ENCODE measurements at regions of chr5 and their contacts with region 1.

Region 1: GRCh38 chr5:169701910-169702451 is 64.9 kb downstream of the DOCK2 start:
- DNase-seq: no peak
- H3K4me3 Mint-ChIP-seq: no peak overlapping the region
- H3K27ac Mint-ChIP-seq: peak overlapping the region; percentile 75
- H3K4me1 Mint-ChIP-seq: peaks cover 38% of the 10 kb centered on the region
- H3K27me3 Mint-ChIP-seq: no peaks in the 10 kb centered on the region

Region 2: GRCh38 chr5:169657127-169657526 is 44.9 kb before region 1 on chr5:
- intact Hi-C with region 1: loop called (anchors 1 kb)
- DNase-seq: no peak
- H3K4me3 Mint-ChIP-seq: peak overlapping the region; percentile 35
- H3K27ac Mint-ChIP-seq: peak overlapping the region; percentile 72
- H3K4me1 Mint-ChIP-seq: peaks cover 58% of the 10 kb centered on the region
- H3K27me3 Mint-ChIP-seq: no peaks in the 10 kb centered on the region

Region 3: DNA sequence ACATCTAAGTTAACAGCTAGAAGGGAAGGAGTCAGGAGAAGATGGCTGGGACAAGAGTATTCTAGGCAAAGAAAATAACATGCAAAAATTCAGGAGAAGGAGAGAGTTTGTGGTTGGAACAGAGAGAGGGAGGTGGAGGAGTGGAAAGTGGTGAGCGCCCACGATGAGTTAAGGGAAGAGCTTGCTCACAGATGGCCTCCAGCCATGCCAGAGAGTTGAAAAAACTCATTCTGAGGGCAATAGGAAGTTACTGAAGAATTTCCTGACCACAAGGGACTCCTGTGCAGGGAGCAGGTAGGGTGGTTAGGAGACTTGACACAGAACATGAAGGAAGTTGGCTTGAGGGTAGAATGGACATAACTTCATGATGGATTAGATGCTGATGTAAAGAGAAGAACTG is 94.8 kb after region 1 on chr5:
- intact Hi-C with region 1: no loop called
- DNase-seq: no peak
- H3K4me3 Mint-ChIP-seq: no peak overlapping the region
- H3K27ac Mint-ChIP-seq: peak overlapping the region; percentile 48
- H3K4me1 Mint-ChIP-seq: peaks cover 38% of the 10 kb centered on the region
- H3K27me3 Mint-ChIP-seq: no peaks in the 10 kb centered on the region

Region 4: GRCh38 chr5:169838688-169839087 is 136.7 kb after region 1 on chr5:
- intact Hi-C with region 1: loop called (anchors 10 kb)
- DNase-seq: no peak
- H3K4me3 Mint-ChIP-seq: no peak overlapping the region
- H3K27ac Mint-ChIP-seq: peak overlapping the region; percentile 38
- H3K4me1 Mint-ChIP-seq: peaks cover 26% of the 10 kb centered on the region
- H3K27me3 Mint-ChIP-seq: no peaks in the 10 kb centered on the region